Naive thymus-derived CD8-positive, alpha-beta T cell (primary cell): ENCODE measurements at regions of chr7 and their contacts with region 1.

Region 1: GRCh38 chr7:100705753-100706671 is at the start of gene POP7:
- DNase-seq: peak; percentile 96 to 99 (median 98)
- ATAC-seq: peak; percentile 93 to 95
- H3K4me3 Mint-ChIP-seq: peak within 1 kb of the TSS; percentile 91 to 99 (median 96)
- H3K27ac Mint-ChIP-seq: peak within 1 kb of the TSS; percentile 88 to 96 (median 93)
- H3K4me1 Mint-ChIP-seq: peaks cover 8 to 25% (median 20%) of the 10 kb centered on the region in 4 donors
- H3K27me3 Mint-ChIP-seq: peaks cover 0 to 2% (median 0%) of the 10 kb centered on the region in 5 donors
- polyA plus RNA-seq, gene POP7: 32.6 to 41.7 (median 33.0) TPM

Region 2: GRCh38 chr7:100556541-100556940 is 149.5 kb before region 1 on chr7:
- POLR2A ChIA-PET with region 1: no interaction called
- DNase-seq: no peak
- ATAC-seq: no peak
- H3K4me3 Mint-ChIP-seq: no peak overlapping the region
- H3K27ac Mint-ChIP-seq: peak overlapping the region in 6 of 10 donors; percentile 19 to 73 (median 37)
- H3K4me1 Mint-ChIP-seq: peaks cover 5 to 14% (median 11%) of the 10 kb centered on the region in 4 donors
- H3K27me3 Mint-ChIP-seq: no peaks in the 10 kb centered on the region

Region 3: GRCh38 chr7:100673300-100673941 is 32.6 kb before region 1 on chr7 and contains the start of gene GNB2:
- POLR2A ChIA-PET with region 1: interaction called, 24 read pairs
- DNase-seq: peak; percentile 92 to 97 (median 96)
- ATAC-seq: peak; percentile 53 to 55
- H3K4me3 Mint-ChIP-seq: peak within 1 kb of the TSS; percentile 94 to 97 (median 96)
- H3K27ac Mint-ChIP-seq: peak within 1 kb of the TSS; percentile 84 to 99 (median 97)
- H3K4me1 Mint-ChIP-seq: peaks cover 8 to 22% (median 21%) of the 10 kb centered on the region in 4 donors
- H3K27me3 Mint-ChIP-seq: no peaks in the 10 kb centered on the region
- polyA plus RNA-seq, gene GNB2: 34.8 to 42.4 (median 42.1) TPM

Region 4: GRCh38 chr7:100680167-100680575 is 25.8 kb before region 1 on chr7:
- POLR2A ChIA-PET with region 1: interaction called, 24 read pairs
- DNase-seq: no peak
- ATAC-seq: no peak
- H3K4me3 Mint-ChIP-seq: peak overlapping the region in 5 of 10 donors; percentile 22 to 54 (median 48)
- H3K27ac Mint-ChIP-seq: peak overlapping the region; percentile 41 to 90 (median 69)
- H3K4me1 Mint-ChIP-seq: peaks cover 20 to 47% (median 42%) of the 10 kb centered on the region in 4 donors
- H3K27me3 Mint-ChIP-seq: no peaks in the 10 kb centered on the region

Region 5: DNA sequence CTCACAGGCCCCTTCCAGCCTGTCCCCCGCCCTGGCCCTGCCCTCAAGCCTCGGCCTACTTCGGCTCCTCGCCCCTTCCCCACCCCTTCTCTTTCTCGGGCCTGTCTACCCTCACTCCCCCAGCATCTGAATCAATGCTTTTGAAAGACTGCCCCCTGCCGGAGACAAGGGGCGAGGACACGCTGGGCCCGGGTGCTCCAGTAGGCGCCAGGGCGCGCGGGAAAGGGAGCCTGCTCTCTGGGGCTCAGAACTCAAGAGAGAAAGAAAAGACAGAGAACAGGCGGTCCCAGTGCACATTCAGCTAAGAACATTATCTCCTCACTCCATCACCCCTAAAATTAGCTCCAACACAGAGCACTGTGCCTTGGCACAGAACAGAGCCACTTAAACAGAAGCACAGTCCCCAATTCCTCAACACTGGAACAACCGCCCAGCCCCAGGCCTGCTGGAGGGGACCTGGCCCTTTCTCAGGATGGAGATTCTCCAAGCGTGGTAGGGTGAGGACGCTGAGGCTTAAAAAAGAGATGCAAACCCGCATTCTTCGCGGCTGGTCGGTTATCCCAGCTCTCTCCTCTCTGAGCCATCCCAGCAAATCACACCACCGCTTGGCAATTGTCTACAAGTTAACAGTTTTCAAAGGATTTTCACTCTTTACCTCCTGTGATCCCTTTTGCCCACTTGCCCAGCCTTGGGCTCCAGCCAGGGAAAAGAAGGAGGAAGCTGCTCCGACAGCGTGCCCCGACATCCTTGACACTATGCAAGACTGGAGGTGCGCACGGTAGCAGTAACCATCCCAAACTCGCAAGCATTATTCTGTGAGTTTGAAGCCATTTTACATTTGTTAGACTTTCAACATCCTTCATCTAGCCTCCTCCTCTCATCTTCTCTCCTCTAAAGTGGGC is 14.1 kb before region 1 on chr7:
- POLR2A ChIA-PET with region 1: interaction called, 43 read pairs
- DNase-seq: peak; percentile 59 to 89 (median 78)
- ATAC-seq: peak; percentile 71 to 73
- H3K4me3 Mint-ChIP-seq: peak overlapping the region; percentile 88 to 99 (median 95)
- H3K27ac Mint-ChIP-seq: peak overlapping the region; percentile 30 to 97 (median 90)
- H3K4me1 Mint-ChIP-seq: peaks cover 23 to 56% (median 46%) of the 10 kb centered on the region in 4 donors
- H3K27me3 Mint-ChIP-seq: no peaks in the 10 kb centered on the region

Region 6: DNA sequence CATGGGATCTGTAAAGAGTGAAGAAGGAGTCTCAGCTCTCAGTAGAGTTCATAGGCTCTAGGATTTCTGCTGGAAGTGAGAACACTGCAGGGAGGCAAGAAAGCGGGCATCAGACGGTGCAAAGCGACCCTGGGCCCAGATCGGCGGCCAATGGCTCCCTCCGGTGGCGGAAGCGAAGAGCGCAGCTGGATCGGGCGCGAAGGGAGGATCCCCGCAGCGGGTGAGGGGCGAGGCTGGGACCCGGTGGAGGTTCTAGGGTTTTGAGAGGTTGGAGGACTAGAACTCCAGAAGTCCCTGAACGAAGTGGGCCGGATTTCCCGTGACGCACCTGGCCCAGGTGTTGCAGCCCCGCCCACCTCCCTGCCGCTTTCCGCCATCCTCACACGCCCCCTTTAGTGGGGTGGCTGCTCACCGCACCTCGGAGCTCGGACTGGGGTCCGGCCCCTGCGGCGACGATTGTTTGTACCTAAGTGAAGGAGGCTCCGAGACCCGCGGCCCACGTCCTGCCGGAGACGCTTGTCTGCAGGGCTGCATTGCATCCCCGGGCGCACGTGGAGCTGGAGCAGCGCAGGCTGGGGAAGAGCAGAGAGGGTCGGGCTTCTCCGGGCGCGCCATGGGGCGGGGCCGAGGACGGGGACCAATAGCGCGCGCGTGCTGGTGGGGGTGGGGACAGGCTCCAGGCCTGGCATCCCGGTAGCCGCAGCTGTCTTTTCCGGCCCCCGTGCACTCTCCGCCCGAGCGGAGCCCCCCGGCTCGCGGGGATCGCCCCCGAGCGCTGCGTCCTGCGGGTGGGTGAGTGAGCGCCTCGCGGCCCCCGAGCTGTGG is 146.2 kb after region 1 on chr7 and contains the start of gene SLC12A9:
- POLR2A ChIA-PET with region 1: interaction called, 31 read pairs
- DNase-seq: peak; percentile 72 to 90 (median 83)
- ATAC-seq: peak; percentile 92 to 95
- H3K4me3 Mint-ChIP-seq: peak within 1 kb of the TSS; percentile 87 to 95 (median 92)
- H3K27ac Mint-ChIP-seq: peak within 1 kb of the TSS; percentile 79 to 98 (median 90)
- H3K4me1 Mint-ChIP-seq: peaks cover 12 to 39% (median 28%) of the 10 kb centered on the region in 4 donors
- H3K27me3 Mint-ChIP-seq: no peaks in the 10 kb centered on the region
- polyA plus RNA-seq, gene SLC12A9: 6.8 to 9.4 (median 8.0) TPM

Region 7: DNA sequence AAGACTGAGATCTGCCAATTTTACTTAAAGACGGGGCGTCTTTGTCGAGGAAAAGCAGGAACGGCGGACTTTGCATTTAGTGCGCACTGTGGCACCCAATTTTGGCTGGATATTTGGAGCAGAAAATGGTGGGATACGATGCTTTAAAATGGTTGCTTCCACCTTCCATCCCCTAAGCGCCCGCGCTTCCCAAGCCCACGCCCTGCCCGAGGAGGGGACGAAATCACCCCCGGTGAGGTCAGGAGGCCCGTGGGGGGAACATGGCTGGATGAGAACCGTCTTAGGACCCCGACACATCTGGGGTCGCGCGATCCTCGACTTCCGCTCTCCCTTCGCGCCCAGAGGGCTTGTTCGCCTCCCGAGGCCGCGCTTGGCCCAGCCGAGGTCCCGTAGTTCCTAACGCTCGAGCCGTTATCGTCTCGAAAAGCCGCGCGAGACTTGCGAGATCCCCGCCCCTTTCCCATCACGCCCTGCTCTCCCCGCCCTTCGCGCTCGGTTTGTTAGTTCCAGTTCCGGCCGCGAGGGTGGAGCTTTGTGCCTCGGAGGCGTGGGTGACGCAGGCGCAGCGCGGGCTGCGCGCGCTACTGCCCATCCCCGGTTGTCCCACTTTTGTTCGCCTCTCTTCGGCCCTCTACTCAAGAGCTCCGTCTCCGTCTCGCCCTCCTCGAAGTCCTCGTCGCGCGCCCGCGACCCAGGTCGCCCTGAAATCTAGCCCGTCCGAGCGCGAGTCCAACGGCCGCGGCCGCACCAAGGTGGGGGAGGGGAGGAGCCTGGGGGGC is 168.8 kb after region 1 on chr7 and contains the start of gene SRRT:
- POLR2A ChIA-PET with region 1: interaction called, 15 read pairs
- DNase-seq: peak; percentile 95 to 99 (median 98)
- ATAC-seq: peak; percentile 94 to 95
- H3K4me3 Mint-ChIP-seq: peak within 1 kb of the TSS; percentile 95 to 99 (median 98)
- H3K27ac Mint-ChIP-seq: peak within 1 kb of the TSS; percentile 96 to 99 (median 98)
- H3K4me1 Mint-ChIP-seq: peaks cover 14 to 53% (median 49%) of the 10 kb centered on the region in 4 donors
- H3K27me3 Mint-ChIP-seq: peaks cover 0 to 3% (median 0%) of the 10 kb centered on the region in 5 donors
- polyA plus RNA-seq, gene SRRT: 51.1 to 69.4 (median 63.2) TPM